ENCODE measurements at regions of chr16 and their contacts with region 1.

Region 1: GRCh38 chr16:11783319-11784037 is 13.6 kb downstream of the ZC3H7A start:
- DNase-seq: peak; percentile 63
- H3K4me3 Mint-ChIP-seq: peak overlapping the region; percentile 71
- H3K27ac Mint-ChIP-seq: peak overlapping the region; percentile 99
- H3K4me1 Mint-ChIP-seq: peaks cover 69% of the 10 kb centered on the region
- H3K27me3 Mint-ChIP-seq: no peaks in the 10 kb centered on the region

Region 2: DNA sequence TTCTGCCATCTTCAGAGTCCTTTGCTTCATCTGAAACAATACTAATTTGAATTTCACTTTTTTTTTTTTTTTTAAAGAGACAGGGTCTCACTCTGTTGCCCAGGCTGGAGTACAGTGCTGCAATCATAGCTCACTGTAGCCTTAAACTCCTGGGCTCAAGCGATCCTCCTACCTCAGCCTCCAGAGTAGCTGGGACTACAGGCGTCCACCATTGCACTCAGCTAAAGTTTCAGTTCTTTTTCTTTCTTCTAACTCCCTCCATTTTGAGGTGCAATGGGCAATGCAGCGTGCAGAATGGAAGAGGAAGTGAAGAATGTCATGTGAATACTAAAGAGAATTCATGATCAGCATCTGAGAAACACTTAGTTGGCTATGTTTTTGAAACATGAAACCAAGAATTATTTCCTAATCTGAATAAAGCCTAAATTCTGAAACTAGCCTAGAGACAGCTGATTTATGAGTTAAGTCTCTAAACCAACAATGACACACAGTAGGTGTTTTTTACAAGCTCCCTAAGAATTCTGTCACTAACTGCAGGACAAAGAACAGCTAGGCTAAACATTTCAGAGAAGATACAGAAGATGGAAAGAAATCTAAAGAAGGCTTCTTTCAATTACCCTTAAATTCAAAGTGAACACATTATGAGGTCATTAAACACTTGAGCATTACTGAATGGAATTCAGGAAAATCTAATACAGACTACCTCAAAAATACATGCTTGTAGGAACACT is 94.3 kb before region 1 on chr16:
- CTCF ChIA-PET with region 1: no interaction called
- DNase-seq: no peak
- H3K4me3 Mint-ChIP-seq: no peak overlapping the region
- H3K27ac Mint-ChIP-seq: peak overlapping the region; percentile 67
- H3K4me1 Mint-ChIP-seq: peaks cover 10% of the 10 kb centered on the region
- H3K27me3 Mint-ChIP-seq: no peaks in the 10 kb centered on the region

Region 3: GRCh38 chr16:11797166-11797956 is 13.9 kb after region 1 on chr16 and contains the start of gene ZC3H7A:
- CTCF ChIA-PET with region 1: interaction called, 17 read pairs
- DNase-seq: peak; percentile 95
- H3K4me3 Mint-ChIP-seq: peak within 1 kb of the TSS; percentile 87
- H3K27ac Mint-ChIP-seq: peak within 1 kb of the TSS; percentile 97
- H3K4me1 Mint-ChIP-seq: peaks cover 79% of the 10 kb centered on the region
- H3K27me3 Mint-ChIP-seq: no peaks in the 10 kb centered on the region

Measured in activated naive CD4-positive, alpha-beta T cell treated with anti-CD3 and anti-CD28 coated beads, Interleukin-2, amount 10 ng/mL, durations not matched to agents 7 days and 5 days (primary cell).